ENCODE measurements at regions of chr11 and their contacts with region 1.

Region 1: DNA sequence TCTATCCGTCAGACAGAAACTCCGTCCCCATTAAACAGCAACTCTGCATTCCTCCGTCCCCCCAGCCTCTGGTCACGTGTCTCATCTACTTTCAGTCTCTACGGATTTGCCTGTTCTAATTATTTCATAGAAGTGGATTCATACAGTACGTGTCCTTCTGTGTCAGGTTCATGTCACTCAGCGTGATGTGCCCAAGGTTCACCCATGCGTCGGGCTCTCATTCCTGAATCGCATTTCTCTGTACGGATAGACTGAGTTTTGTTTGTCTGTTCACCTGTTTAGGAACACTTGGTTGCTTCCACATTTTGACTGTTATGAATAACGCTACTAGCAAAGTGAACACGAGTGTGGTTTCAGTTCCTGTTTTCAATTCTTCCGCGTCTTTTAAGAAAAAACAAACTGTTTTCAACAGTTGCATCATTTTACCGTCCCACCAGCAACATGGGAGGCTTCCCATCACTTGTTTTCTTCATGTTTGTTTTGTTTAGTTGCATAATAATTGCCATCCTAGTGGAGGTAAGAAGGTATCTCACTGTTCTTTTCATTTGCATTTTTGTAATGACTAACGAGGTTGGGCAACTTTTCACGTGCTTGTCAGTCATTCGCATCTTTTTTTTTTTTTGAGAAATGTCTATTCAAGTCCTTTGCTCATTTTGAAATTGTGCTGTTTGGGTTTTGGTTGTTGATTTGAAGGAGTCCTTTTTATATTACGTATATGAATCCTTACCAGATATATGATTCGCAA is 8.9 kb upstream of the NLRP6 start:
- DNase-seq: peak in 9 of 10 donors; percentile 49 to 91 (median 74)
- ATAC-seq: peak; percentile 55 to 79
- H3K4me3 Mint-ChIP-seq: peak overlapping the region; percentile 84 to 94 (median 88)
- H3K27ac Mint-ChIP-seq: peak overlapping the region; percentile 96 to 99 (median 98)
- H3K4me1 Mint-ChIP-seq: peaks cover 11 to 42% (median 36%) of the 10 kb centered on the region in 4 donors
- H3K27me3 Mint-ChIP-seq: no peaks in the 10 kb centered on the region

Region 2: GRCh38 chr11:236774-237767 is 32.2 kb before region 1 on chr11 and contains the start of gene PSMD13:
- POLR2A ChIA-PET with region 1: interaction called, 23 read pairs
- DNase-seq: peak; percentile 82 to 91 (median 86)
- ATAC-seq: peak; percentile 80 to 83
- H3K4me3 Mint-ChIP-seq: peak within 1 kb of the TSS; percentile 93 to 99 (median 98)
- H3K27ac Mint-ChIP-seq: peak within 1 kb of the TSS; percentile 89 to 100 (median 100)
- H3K4me1 Mint-ChIP-seq: peaks cover 20 to 61% (median 46%) of the 10 kb centered on the region in 4 donors
- H3K27me3 Mint-ChIP-seq: no peaks in the 10 kb centered on the region
- polyA plus RNA-seq, gene PSMD13: 196 to 223 (median 208) TPM

Region 3: GRCh38 chr11:288328-289144 is 19.2 kb after region 1 on chr11 and contains the start of gene PGGHG:
- POLR2A ChIA-PET with region 1: interaction called, 863 read pairs
- DNase-seq: peak in 9 of 10 donors; percentile 2 to 75 (median 58)
- ATAC-seq: peak; percentile 17 to 28
- H3K4me3 Mint-ChIP-seq: peak within 1 kb of the TSS; percentile 93 to 100 (median 97)
- H3K27ac Mint-ChIP-seq: peak within 1 kb of the TSS; percentile 93 to 99 (median 98)
- H3K4me1 Mint-ChIP-seq: peaks cover 27 to 56% (median 41%) of the 10 kb centered on the region in 4 donors
- H3K27me3 Mint-ChIP-seq: no peaks in the 10 kb centered on the region
- polyA plus RNA-seq, gene PGGHG: 8.1 to 14.9 (median 11.2) TPM

Region 4: GRCh38 chr11:313787-314547 is 44.6 kb after region 1 on chr11 and contains the start of gene IFITM1:
- POLR2A ChIA-PET with region 1: interaction called, 36 read pairs
- DNase-seq: peak in 9 of 10 donors; percentile 55 to 90 (median 82)
- ATAC-seq: peak; percentile 56 to 78
- H3K4me3 Mint-ChIP-seq: peak within 1 kb of the TSS; percentile 88 to 100 (median 97)
- H3K27ac Mint-ChIP-seq: peak within 1 kb of the TSS; percentile 94 to 99 (median 99)
- H3K4me1 Mint-ChIP-seq: peaks cover 30 to 50% (median 40%) of the 10 kb centered on the region in 4 donors
- H3K27me3 Mint-ChIP-seq: no peaks in the 10 kb centered on the region
- polyA plus RNA-seq, gene IFITM1: 1,833 to 2,198 (median 2,135) TPM

Region 5: GRCh38 chr11:335779-336658 is 66.7 kb after region 1 on chr11:
- POLR2A ChIA-PET with region 1: no interaction called
- DNase-seq: no peak
- ATAC-seq: peak in 1 of 2 donors; percentile 27
- H3K4me3 Mint-ChIP-seq: peak overlapping the region in 7 of 10 donors; percentile 12 to 75 (median 45)
- H3K27ac Mint-ChIP-seq: peak overlapping the region; percentile 10 to 88 (median 70)
- H3K4me1 Mint-ChIP-seq: peaks cover 24 to 62% (median 50%) of the 10 kb centered on the region in 4 donors
- H3K27me3 Mint-ChIP-seq: no peaks in the 10 kb centered on the region

Region 6: DNA sequence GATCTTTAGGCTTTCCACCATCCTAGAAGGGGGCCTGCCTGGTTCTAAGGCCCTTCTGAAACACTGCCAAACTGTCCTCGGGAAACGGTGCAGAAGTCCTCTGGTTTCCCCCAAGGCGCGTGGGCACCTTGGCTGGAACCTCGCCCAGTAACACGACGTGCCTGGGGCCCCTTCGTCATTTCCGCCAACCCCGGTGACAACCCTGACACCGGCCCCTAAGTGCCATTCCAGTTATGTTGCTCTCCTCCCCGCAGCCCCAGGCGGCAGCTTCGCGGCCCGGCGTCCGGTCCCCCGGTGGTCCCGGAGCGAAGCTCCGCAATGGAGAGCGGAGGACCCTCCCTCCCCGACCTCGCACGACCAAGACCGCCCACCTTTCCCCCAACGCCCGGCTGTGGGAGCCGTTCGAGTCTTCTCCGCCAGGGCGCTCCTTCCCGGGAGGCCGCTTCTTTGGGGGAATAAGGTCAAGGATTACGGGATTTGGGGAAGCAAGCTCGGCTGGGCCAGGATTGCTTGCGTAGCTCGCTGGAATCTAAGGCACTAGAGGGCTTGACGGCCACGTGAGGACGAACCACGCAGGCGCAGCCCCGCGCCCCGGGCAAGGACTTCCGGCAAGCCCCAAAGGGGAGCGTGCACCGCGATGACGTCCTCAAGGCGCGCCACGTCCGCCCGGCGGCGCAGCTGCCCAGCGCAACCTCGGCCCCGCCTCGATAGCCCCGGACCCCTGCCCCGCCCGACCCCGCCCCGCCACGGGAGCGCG is 237.1 kb after region 1 on chr11:
- POLR2A ChIA-PET with region 1: interaction called, 14 read pairs
- DNase-seq: peak; percentile 92 to 98 (median 96)
- ATAC-seq: peak; percentile 75 to 76
- H3K4me3 Mint-ChIP-seq: peak overlapping the region; percentile 95 to 99 (median 98)
- H3K27ac Mint-ChIP-seq: peak overlapping the region; percentile 97 to 100 (median 100)
- H3K4me1 Mint-ChIP-seq: peaks cover 8 to 40% (median 25%) of the 10 kb centered on the region in 4 donors
- H3K27me3 Mint-ChIP-seq: no peaks in the 10 kb centered on the region

Measured in naive thymus-derived CD8-positive, alpha-beta T cell (primary cell).